MCF 10A (cell line): ENCODE measurements at regions of chr22 and their contacts with region 1.

Region 1: DNA sequence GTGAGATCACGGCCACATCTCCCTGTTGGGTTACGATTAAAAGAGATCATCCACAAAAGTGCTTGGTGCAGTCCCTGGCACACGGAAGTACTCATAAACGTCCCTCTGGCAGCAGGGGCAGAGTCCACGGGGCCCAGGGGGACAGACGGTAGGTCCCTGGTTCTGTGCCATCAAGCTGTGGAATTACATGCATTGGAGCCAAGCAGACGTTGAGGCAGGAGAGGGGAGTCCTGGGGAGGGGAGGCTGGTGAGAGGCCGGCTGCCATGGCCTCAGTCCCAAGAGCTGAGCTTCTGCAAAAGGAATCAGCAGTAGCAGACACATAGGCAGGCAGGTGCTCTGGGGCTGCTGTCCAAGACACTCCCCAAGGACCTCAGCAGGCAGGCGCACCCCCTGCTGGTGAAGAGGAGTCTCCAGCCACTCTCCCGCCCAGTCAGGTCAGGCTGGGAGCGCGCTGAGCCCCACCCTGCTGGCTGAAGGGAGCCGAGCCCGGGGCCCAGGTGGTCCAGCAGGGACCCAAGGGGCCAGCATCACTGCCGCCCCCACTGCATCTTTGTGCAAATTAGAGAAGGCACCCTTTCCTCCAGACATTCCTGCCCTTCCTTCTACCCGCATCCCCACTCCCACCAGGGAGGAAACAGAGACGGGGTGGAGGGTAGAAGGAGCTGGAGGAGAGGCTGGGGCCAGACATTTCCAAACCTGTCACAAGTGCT is 7.6 kb upstream of the KCTD17 start:
- DNase-seq: peak; percentile 79
- H3K4me3 Mint-ChIP-seq: no peak overlapping the region
- H3K27ac Mint-ChIP-seq: no peak overlapping the region
- H3K4me1 Mint-ChIP-seq: peaks cover 7% of the 10 kb centered on the region
- H3K27me3 Mint-ChIP-seq: no peaks in the 10 kb centered on the region
- CTCF ChIP-seq: peak; percentile 75

Region 2: GRCh38 chr22:36546092-36546804 is 497.7 kb before region 1 on chr22:
- CTCF ChIA-PET with region 1: interaction called, 5 read pairs
- POLR2A ChIA-PET with region 1: no interaction called
- intact Hi-C with region 1: loop called (anchors 5 kb)
- DNase-seq: peak; percentile 54
- H3K4me3 Mint-ChIP-seq: no peak overlapping the region
- H3K27ac Mint-ChIP-seq: no peak overlapping the region
- H3K4me1 Mint-ChIP-seq: peaks cover 22% of the 10 kb centered on the region
- H3K27me3 Mint-ChIP-seq: peaks cover 17% of the 10 kb centered on the region
- CTCF ChIP-seq: peak; percentile 78

Region 3: GRCh38 chr22:36873680-36874537 is 170.1 kb before region 1 on chr22:
- CTCF ChIA-PET with region 1: interaction called, 10 read pairs
- POLR2A ChIA-PET with region 1: no interaction called
- intact Hi-C with region 1: loop called (anchors 2 kb)
- DNase-seq: peak; percentile 97
- H3K4me3 Mint-ChIP-seq: peak overlapping the region; percentile 29
- H3K27ac Mint-ChIP-seq: peak overlapping the region; percentile 90
- H3K4me1 Mint-ChIP-seq: peaks cover 29% of the 10 kb centered on the region
- H3K27me3 Mint-ChIP-seq: peaks cover 31% of the 10 kb centered on the region
- CTCF ChIP-seq: peak; percentile 51

Region 4: GRCh38 chr22:36986242-36986821 is 57.7 kb before region 1 on chr22:
- CTCF ChIA-PET with region 1: interaction called, 10 read pairs
- POLR2A ChIA-PET with region 1: no interaction called
- intact Hi-C with region 1: loop called (anchors 1 kb)
- DNase-seq: peak; percentile 57
- H3K4me3 Mint-ChIP-seq: no peak overlapping the region
- H3K27ac Mint-ChIP-seq: no peak overlapping the region
- H3K4me1 Mint-ChIP-seq: no peaks in the 10 kb centered on the region
- H3K27me3 Mint-ChIP-seq: peaks cover 16% of the 10 kb centered on the region
- CTCF ChIP-seq: peak; percentile 88

Region 5: GRCh38 chr22:37032546-37033460 is 11.2 kb before region 1 on chr22:
- CTCF ChIA-PET with region 1: interaction called, 24 read pairs
- POLR2A ChIA-PET with region 1: interaction called, 18 read pairs
- intact Hi-C with region 1: no loop called
- DNase-seq: peak; percentile 96
- H3K4me3 Mint-ChIP-seq: peak overlapping the region; percentile 33
- H3K27ac Mint-ChIP-seq: peak overlapping the region; percentile 78
- H3K4me1 Mint-ChIP-seq: peaks cover 17% of the 10 kb centered on the region
- H3K27me3 Mint-ChIP-seq: no peaks in the 10 kb centered on the region
- CTCF ChIP-seq: no peak